Dorsolateral prefrontal cortex (tissue), 120 donors: ENCODE measurements at regions of chr11 and their contacts with region 1.

Region 1: GRCh38 chr11:73393479-73394380 is 17.5 kb downstream of the RELT start:
- DNase-seq: peak; percentile 58 to 85 (median 77)
- H3K4me3 ChIP-seq: no peak overlapping the region
- H3K27ac ChIP-seq: peak overlapping the region in 14 of 59 donors; percentile 3 to 65 (median 37)
- H3K27me3 ChIP-seq: no peaks in the 10 kb centered on the region
- CTCF ChIP-seq: peak; percentile 37 to 87 (median 80)

Region 2: GRCh38 chr11:73053964-73054363 is 339.8 kb before region 1 on chr11:
- intact Hi-C with region 1: no loop called
- DNase-seq: no peak
- H3K4me3 ChIP-seq: no peak overlapping the region
- H3K27ac ChIP-seq: peak overlapping the region in 1 of 59 donors; percentile 32
- H3K27me3 ChIP-seq: no peaks in the 10 kb centered on the region
- CTCF ChIP-seq: no peak

Region 3: DNA sequence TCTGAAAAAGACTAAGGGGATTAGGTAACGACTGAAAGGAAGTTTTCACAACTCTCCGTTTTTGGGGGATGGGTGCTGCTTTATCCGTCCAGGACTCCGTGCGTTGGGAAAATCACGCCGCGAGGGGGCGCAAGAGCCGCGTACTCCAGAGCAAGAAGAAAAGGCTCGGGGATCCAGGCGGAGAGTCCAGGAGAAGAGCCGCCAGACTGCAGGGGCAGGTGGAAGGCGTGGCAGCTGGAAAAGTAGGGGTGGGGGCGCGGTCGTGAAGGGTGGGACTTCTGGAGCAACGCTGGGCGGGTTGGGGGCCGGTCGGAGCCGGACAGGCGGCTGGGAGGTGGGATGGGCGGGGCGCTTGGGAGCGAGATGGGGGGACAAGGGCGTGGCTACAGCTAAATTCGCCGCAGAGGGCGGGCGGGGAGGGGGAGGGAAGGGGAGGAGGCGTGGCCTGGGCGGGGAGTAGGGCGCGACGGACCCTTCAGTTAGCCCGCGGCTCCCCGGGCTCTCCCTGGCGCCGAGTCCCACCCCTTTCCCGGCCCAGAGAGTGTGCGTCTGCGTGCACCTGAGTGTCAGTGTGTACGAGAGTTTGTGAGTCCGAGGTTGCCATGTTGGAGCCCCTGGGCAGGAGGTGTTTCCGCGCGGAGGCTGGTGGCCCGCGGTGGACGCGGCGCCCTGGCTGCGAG is 86.3 kb before region 1 on chr11:
- intact Hi-C with region 1: loop called (anchors 5 kb)
- DNase-seq: peak; percentile 91 to 98 (median 94)
- H3K4me3 ChIP-seq: peak overlapping the region; percentile 46 to 81 (median 67)
- H3K27ac ChIP-seq: peak overlapping the region in 52 of 59 donors; percentile 2 to 93 (median 79)
- H3K27me3 ChIP-seq: peaks cover 0 to 9% (median 0%) of the 10 kb centered on the region in 45 donors
- CTCF ChIP-seq: peak; percentile 44 to 87 (median 78)

Region 4: DNA sequence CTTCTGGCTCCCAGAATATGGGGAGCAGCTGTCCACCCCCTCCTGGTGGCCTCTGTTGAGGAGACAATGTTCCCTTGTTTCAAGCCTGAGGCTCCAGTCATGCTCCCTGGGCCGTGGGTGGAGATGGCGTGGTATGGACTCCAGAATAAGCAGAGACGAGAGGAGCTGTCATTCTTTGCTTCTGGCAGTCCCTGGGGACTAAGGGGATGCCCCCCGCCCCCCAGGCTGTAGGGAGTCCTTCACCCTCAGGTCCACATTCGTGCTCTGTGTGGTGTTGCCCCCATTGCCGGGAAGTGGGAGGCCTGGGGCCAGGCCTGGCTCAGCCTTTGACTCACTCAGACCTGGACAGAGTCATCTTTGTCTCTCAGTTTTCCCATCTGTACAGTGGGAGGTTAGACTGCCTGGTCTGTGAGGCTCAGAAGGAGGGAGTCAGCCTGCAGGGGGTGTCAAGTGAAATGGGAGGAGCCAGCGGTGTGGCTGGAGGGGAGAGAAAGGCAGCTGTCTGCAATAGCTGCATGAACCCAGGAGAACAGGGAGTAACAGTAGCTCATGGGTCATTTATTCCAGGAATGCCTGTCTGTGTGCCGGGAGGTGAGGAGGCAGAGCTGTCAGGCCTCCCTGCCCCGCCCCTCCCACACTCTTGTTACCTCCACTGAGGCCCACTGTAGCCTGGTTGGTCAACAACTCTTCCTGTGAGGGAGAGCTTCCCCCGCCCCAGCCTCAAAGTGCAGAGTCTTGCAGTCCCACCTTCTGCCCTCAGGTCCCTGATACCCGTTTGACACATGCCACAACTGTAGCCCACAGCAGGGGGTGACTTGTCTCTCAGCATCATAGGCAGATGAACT is 79.4 kb before region 1 on chr11:
- intact Hi-C with region 1: loop called (anchors 5 kb)
- DNase-seq: peak in 9 of 10 donors; percentile 66 to 84 (median 81)
- H3K4me3 ChIP-seq: peak overlapping the region in 31 of 59 donors; percentile 3 to 79 (median 69)
- H3K27ac ChIP-seq: peak overlapping the region in 58 of 59 donors; percentile 60 to 95 (median 88)
- H3K27me3 ChIP-seq: no peaks in the 10 kb centered on the region
- CTCF ChIP-seq: peak in 11 of 56 donors; percentile 7 to 33 (median 23)

Region 5: GRCh38 chr11:73350908-73351636 is 42.7 kb before region 1 on chr11:
- intact Hi-C with region 1: loop called (anchors 1 kb)
- DNase-seq: peak in 4 of 10 donors; percentile 49 to 79 (median 60)
- H3K4me3 ChIP-seq: peak overlapping the region in 15 of 59 donors; percentile 1 to 31 (median 14)
- H3K27ac ChIP-seq: peak overlapping the region in 9 of 59 donors; percentile 1 to 59 (median 31)
- H3K27me3 ChIP-seq: no peaks in the 10 kb centered on the region
- CTCF ChIP-seq: peak; percentile 90 to 100 (median 97)